ENCODE measurements at regions of chr13 and their contacts with region 1.

Region 1: GRCh38 chr13:49976314-49977258 is 20.3 kb upstream of the TRIM13 start:
- DNase-seq: peak; percentile 77
- H3K4me3 ChIP-seq: no peak overlapping the region
- H3K27ac ChIP-seq: no peak overlapping the region
- H3K4me1 ChIP-seq: no peaks in the 10 kb centered on the region
- H3K27me3 ChIP-seq: no peaks in the 10 kb centered on the region
- CTCF ChIP-seq: peak; percentile 88 to 90
- POLR2A ChIP-seq: no peak

Region 2: DNA sequence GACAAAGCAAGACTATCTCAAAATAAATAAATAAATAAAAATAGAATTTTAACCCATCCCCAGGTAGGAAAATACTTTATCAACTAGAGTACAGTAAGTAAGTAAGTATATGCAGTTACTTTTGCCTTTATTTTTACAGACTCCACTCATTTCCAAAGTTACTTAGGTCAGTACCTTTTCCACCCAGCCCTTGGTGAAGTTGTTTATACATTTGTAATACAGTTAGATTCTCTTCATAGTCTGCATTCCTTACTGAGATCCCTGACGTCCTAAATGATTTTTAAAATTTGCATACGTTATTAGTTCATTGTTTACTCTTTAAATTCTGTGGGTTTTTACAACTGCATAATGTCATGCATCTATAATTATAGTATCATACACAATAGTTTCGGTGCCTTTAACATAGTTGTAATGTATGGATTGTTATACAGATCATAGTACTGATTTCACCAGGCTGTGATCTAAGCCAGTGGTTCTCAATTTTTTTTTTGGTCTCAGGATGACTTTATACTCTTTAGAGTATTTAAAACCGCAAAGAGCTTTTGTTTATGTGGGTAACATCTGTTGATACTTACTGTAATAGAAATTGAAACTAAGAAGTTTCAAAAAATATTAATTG is 522.1 kb before region 1 on chr13:
- CTCF ChIA-PET with region 1: no interaction called
- POLR2A ChIA-PET with region 1: no interaction called
- dilution Hi-C with region 1: no loop called
- intact Hi-C with region 1: no loop called
- DNase-seq: no peak
- H3K4me3 ChIP-seq: no peak overlapping the region
- H3K27ac ChIP-seq: no peak overlapping the region
- H3K4me1 ChIP-seq: peaks cover 6% of the 10 kb centered on the region
- H3K27me3 ChIP-seq: peaks cover 3 to 7% of the 10 kb centered on the region in 2 experiments
- CTCF ChIP-seq: no peak
- POLR2A ChIP-seq: no peak

Region 3: GRCh38 chr13:49936085-49936940 is 40.3 kb before region 1 on chr13 and contains the start of gene SPRYD7:
- CTCF ChIA-PET with region 1: interaction called, 11 read pairs
- POLR2A ChIA-PET with region 1: no interaction called
- dilution Hi-C with region 1: no loop called
- intact Hi-C with region 1: no loop called
- DNase-seq: peak; percentile 99
- H3K4me3 ChIP-seq: peak within 1 kb of the TSS; percentile 69 to 82 (median 79)
- H3K27ac ChIP-seq: peak within 1 kb of the TSS; percentile 21
- H3K4me1 ChIP-seq: peaks cover 8% of the 10 kb centered on the region
- H3K27me3 ChIP-seq: no peaks in the 10 kb centered on the region
- CTCF ChIP-seq: peak; percentile 90 to 95
- POLR2A ChIP-seq: peak; percentile 70
- total RNA-seq, gene SPRYD7: 7.0 and 7.5 TPM in 2 replicates

Region 4: GRCh38 chr13:50075619-50076097 is 99.1 kb after region 1 on chr13:
- CTCF ChIA-PET with region 1: interaction called, 52 read pairs
- POLR2A ChIA-PET with region 1: no interaction called
- dilution Hi-C with region 1: no loop called
- intact Hi-C with region 1: no loop called
- DNase-seq: peak; percentile 47
- H3K4me3 ChIP-seq: no peak overlapping the region
- H3K27ac ChIP-seq: no peak overlapping the region
- H3K4me1 ChIP-seq: peaks cover 33% of the 10 kb centered on the region
- H3K27me3 ChIP-seq: no peaks in the 10 kb centered on the region
- CTCF ChIP-seq: no peak
- POLR2A ChIP-seq: no peak

Region 5: GRCh38 chr13:50244713-50245574 is 268.4 kb after region 1 on chr13:
- CTCF ChIA-PET with region 1: no interaction called
- POLR2A ChIA-PET with region 1: no interaction called
- dilution Hi-C with region 1: no loop called
- intact Hi-C with region 1: no loop called
- DNase-seq: peak; percentile 90
- H3K4me3 ChIP-seq: no peak overlapping the region
- H3K27ac ChIP-seq: no peak overlapping the region
- H3K4me1 ChIP-seq: peaks cover 15% of the 10 kb centered on the region
- H3K27me3 ChIP-seq: no peaks in the 10 kb centered on the region
- CTCF ChIP-seq: no peak
- POLR2A ChIP-seq: no peak

Region 6: GRCh38 chr13:50801087-50801931 is 824.7 kb after region 1 on chr13:
- CTCF ChIA-PET with region 1: interaction called, 22 read pairs
- POLR2A ChIA-PET with region 1: no interaction called
- dilution Hi-C with region 1: no loop called
- intact Hi-C with region 1: loop called (anchors 1 kb)
- DNase-seq: peak; percentile 75
- H3K4me3 ChIP-seq: no peak overlapping the region
- H3K27ac ChIP-seq: no peak overlapping the region
- H3K4me1 ChIP-seq: peaks cover 4% of the 10 kb centered on the region
- H3K27me3 ChIP-seq: no peaks in the 10 kb centered on the region
- CTCF ChIP-seq: peak; percentile 71 to 72
- POLR2A ChIP-seq: no peak

Region 7: DNA sequence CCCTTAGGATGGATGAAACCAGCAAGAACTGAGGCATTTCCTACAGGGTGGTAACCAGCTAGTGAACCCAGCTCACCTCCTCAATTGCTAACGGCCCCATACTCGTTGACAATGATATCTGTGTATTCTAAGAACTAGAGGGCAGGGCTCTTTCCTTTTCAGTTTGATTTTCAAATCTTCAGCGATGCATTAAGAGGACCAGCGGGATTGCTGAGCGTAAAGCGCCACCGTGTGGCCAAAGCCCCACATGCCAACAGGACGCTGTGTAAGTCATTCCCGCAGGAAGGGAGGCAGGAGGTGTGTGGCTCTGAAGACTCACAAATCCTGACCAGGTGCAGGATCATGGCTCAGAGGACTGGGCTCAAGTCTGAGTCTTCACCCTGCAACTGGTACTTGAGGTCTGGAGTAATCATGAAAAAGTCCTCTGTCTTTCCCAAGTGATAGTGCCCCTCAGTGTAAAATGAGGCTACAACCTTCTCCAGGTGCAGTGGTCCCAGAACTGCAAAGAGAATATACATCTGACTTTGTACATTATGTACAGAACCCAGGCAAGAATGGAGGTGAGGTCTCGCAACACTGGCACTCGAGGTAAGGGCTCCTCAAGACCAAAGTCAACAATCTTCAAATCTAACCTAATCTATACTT is 1093.5 kb after region 1 on chr13:
- CTCF ChIA-PET with region 1: interaction called, 19 read pairs
- POLR2A ChIA-PET with region 1: no interaction called
- dilution Hi-C with region 1: no loop called
- intact Hi-C with region 1: loop called (anchors 1 kb)
- DNase-seq: peak; percentile 76
- H3K4me3 ChIP-seq: no peak overlapping the region
- H3K27ac ChIP-seq: no peak overlapping the region
- H3K4me1 ChIP-seq: peaks cover 11% of the 10 kb centered on the region
- H3K27me3 ChIP-seq: peaks cover 3 to 9% of the 10 kb centered on the region in 2 experiments
- CTCF ChIP-seq: peak; percentile 92 to 94
- POLR2A ChIP-seq: no peak